Activated CD4-positive, alpha-beta memory T cell treated with anti-CD3 and anti-CD28 coated beads for 36 hours (primary cell): ENCODE measurements at regions of chr1 and their contacts with region 1.

Region 1: DNA sequence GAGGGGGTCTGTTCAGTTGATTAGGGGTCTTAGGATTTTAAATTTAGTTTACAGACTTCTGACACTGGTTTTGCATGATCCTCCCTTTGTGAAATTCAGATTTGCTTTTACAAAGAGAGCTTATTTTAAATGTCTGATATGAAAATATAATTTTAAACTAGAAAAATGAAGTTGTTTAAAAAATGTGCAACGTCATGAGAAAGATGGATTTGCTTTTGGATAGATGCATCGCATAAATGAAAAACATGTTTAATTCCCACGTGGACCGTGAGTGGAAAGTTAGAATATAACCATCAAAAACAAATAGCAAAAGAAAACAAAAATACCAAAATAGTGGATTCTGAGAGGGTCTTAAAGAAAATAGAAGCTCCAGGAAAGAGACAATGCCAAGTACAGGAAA is 2.0 kb upstream of the OR2T3 start:
- DNase-seq: no peak
- H3K4me3 Mint-ChIP-seq: no peak overlapping the region
- H3K27ac Mint-ChIP-seq: no peak overlapping the region
- H3K4me1 Mint-ChIP-seq: no peaks in the 10 kb centered on the region
- H3K27me3 Mint-ChIP-seq: no peaks in the 10 kb centered on the region

Region 2: GRCh38 chr1:248251530-248251929 is 219.6 kb before region 1 on chr1:
- CTCF ChIA-PET with region 1: no interaction called
- POLR2A ChIA-PET with region 1: no interaction called
- intact Hi-C with region 1: no loop called
- DNase-seq: no peak
- H3K4me3 Mint-ChIP-seq: no peak overlapping the region
- H3K27ac Mint-ChIP-seq: no peak overlapping the region
- H3K4me1 Mint-ChIP-seq: no peaks in the 10 kb centered on the region
- H3K27me3 Mint-ChIP-seq: peaks cover 9% of the 10 kb centered on the region

Region 3: GRCh38 chr1:248359415-248359814 is 111.7 kb before region 1 on chr1:
- CTCF ChIA-PET with region 1: no interaction called
- POLR2A ChIA-PET with region 1: no interaction called
- intact Hi-C with region 1: no loop called
- DNase-seq: no peak
- H3K4me3 Mint-ChIP-seq: no peak overlapping the region
- H3K27ac Mint-ChIP-seq: no peak overlapping the region
- H3K4me1 Mint-ChIP-seq: no peaks in the 10 kb centered on the region
- H3K27me3 Mint-ChIP-seq: peaks cover 13% of the 10 kb centered on the region

Region 4: GRCh38 chr1:248576260-248576980 is 105.3 kb after region 1 on chr1:
- CTCF ChIA-PET with region 1: no interaction called
- POLR2A ChIA-PET with region 1: no interaction called
- intact Hi-C with region 1: loop called (anchors 10 kb)
- DNase-seq: peak; percentile 13
- H3K4me3 Mint-ChIP-seq: no peak overlapping the region
- H3K27ac Mint-ChIP-seq: no peak overlapping the region
- H3K4me1 Mint-ChIP-seq: peaks cover 8% of the 10 kb centered on the region
- H3K27me3 Mint-ChIP-seq: no peaks in the 10 kb centered on the region